Right ventricle myocardium superior (tissue), 1 donor: ENCODE measurements at regions of chr4 and their contacts with region 1.

Region 1: GRCh38 chr4:159227984-159228383 is 125.1 kb downstream of the RAPGEF2 start:
- DNase-seq: peak; percentile 83
- ATAC-seq: peak; percentile 88

Region 2: DNA sequence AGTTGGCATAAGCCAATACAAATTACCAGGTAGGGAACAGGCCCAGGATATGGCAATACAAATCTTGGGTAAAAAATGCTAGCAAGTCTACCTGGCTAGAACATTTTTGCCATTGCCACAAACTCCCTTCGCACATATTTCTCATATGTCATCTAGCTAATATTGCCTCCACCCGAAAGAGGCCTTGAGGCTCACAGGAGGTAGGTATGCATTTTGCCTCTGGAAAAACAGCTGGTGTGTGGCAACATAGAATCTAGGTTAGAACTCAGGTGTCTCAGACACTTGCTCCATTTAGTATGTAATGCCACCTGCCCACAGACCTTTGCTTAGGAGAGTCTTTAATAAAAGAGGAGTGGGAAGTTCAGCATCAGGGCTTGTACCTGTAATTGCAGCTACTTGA is 141.4 kb before region 1 on chr4:
- intact Hi-C with region 1: no loop called
- DNase-seq: no peak
- ATAC-seq: no peak

Region 3: GRCh38 chr4:159326480-159326879 is 98.5 kb after region 1 on chr4:
- intact Hi-C with region 1: loop called (anchors 10 kb)
- DNase-seq: no peak
- ATAC-seq: no peak